SK-N-SH (cell line): ENCODE measurements at regions of chr11 and their contacts with region 1.

Region 1: DNA sequence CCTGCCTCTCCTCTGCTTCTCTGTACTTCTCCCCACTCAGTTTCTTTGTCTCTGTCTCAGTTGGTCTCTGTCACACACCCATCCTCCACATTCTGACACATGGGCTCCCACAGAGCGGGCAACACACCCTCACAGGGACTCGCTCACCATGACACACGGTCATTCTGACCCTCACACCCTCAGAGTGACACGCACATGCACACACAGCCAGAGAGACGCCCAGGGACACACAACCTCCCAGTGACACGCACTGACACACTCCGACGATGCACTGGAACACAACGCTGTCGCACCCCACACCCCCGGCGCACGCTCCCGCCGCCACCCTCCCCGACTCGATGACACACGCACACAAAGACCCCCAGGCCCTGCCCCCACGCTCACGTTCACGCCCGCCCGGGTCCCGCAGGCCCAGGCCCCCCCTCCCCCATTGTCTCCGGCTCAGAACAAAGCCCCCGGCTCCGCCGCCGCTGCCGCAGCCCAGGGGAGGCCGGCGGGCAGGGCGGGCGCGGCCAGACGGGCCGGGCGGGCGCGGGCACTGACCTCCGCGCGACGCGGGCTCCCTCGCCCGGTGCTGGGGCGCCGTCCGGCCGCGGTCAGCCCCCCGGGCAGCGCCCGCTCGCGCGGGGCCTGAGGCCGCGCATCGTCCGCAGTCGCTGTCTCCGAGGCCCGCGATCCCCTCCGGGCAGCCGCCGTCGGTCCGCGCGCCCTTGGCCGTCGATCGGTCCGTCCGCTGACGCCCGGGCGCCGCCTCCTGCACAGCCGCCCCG is 404 bp downstream of the DCHS1 start:
- DNase-seq: peak; percentile 78
- H3K4me3 ChIP-seq: peak overlapping the region; percentile 58 to 62
- H3K27ac ChIP-seq: peak overlapping the region in 1 of 2 experiments; percentile 71; a peak in 1 of 4 replicates
- H3K4me1 ChIP-seq: peaks cover 0 to 25% of the 10 kb centered on the region in 2 experiments; a peak in 1 of 4 replicates
- H3K27me3 ChIP-seq: no peaks in the 10 kb centered on the region
- CTCF ChIP-seq: no peak
- EP300 ChIP-seq: no peak
- RAD21 ChIP-seq: no peak

Region 2: GRCh38 chr11:6586434-6587359 is 68.5 kb before region 1 on chr11:
- CTCF ChIA-PET with region 1: no interaction called
- POLR2A ChIA-PET with region 1: no interaction called
- DNase-seq: peak; percentile 63
- H3K4me3 ChIP-seq: peak overlapping the region in 1 of 2 experiments; percentile 16; a peak in 1 of 4 replicates
- H3K27ac ChIP-seq: peak overlapping the region in 1 of 2 experiments; percentile 62; a peak in 2 of 4 replicates
- H3K4me1 ChIP-seq: peaks cover 8 to 11% of the 10 kb centered on the region in 2 experiments; a peak in 2 of 4 replicates
- H3K27me3 ChIP-seq: no peaks in the 10 kb centered on the region
- CTCF ChIP-seq: no peak
- EP300 ChIP-seq: no peak
- RAD21 ChIP-seq: no peak

Region 3: DNA sequence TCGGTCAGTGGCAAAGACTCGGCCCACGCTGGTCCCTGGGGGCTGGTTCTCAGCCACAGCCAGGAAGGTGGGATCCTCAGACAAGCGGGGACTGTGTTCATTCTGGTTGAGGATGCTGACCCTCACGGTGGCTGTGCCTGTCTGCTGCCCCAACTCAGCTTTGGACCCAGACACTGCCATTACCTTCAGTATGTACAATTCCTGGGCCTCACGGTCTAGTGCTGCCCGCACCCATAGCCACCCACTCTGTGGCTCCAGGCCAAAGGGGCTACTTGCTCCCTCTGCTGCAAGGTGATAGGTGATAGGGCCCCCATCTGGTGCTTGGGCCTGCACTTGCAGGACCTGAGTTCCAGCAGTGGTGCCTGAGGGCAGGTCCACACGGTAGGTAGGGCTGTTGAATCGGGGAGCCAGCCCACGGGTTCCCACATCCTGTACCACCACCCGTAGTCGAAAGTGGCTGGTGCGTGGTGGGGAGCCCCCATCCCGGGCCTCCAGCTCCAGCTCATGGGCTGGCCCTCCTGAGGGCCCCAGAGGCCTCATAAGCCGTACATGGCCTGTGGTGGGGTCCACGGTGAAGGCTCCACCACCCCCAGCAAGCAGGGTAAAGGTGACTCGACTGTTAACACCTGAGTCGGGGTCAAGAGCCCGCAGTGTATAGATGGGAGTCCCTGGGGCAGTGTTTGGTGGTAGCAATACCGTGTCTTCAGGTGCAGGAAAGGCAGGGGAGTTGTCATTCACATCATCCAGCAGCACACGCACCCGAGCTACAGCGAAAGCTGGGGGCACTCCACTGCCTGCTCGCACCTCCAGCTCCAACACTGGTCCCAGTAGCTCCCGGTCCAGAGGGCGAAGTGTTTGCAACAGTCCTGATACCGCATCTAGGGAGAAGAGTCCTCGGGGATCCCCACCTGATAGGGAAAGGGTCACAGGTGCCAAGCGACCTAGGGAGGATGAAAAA is 22.8 kb before region 1 on chr11:
- CTCF ChIA-PET with region 1: no interaction called
- POLR2A ChIA-PET with region 1: no interaction called
- DNase-seq: no peak
- H3K4me3 ChIP-seq: no peak overlapping the region
- H3K27ac ChIP-seq: no peak overlapping the region
- H3K4me1 ChIP-seq: no peaks in the 10 kb centered on the region
- H3K27me3 ChIP-seq: no peaks in the 10 kb centered on the region
- CTCF ChIP-seq: no peak
- EP300 ChIP-seq: no peak
- RAD21 ChIP-seq: no peak

Region 4: DNA sequence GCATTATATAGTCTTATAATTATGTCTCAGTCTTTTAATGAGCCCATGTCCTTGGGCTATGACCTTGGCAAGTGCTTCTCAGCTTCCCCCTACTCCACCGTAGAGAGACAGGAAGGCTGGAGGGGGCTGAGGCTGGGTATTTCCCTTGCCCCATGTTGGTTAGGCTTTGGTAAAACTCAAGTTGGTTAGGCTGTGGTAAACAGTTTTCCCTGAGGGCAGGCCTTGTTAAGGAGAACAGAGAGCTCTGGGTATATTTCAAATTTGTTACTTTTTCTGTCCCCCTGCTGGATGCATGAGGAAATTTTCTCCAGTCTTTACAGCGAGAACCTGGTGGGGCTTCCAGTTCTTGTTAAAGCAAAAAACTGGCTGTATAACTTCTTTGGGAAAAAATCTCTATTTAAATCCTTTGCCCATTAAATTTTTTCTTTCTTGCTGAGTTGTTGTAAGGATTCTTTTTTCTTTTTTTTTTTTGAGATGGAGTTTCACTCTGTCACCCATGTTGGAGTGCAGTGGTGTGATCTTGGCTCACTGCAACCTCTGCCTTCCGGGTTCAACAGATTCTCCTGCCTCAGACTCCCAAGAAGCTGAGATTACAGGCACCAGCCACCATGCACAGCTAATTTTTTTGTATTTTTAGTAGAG is 12.6 kb after region 1 on chr11:
- CTCF ChIA-PET with region 1: interaction called, 11 read pairs
- POLR2A ChIA-PET with region 1: interaction called, 4 read pairs
- DNase-seq: no peak
- H3K4me3 ChIP-seq: no peak overlapping the region
- H3K27ac ChIP-seq: no peak overlapping the region
- H3K4me1 ChIP-seq: no peaks in the 10 kb centered on the region
- H3K27me3 ChIP-seq: no peaks in the 10 kb centered on the region
- CTCF ChIP-seq: peak; percentile 57
- EP300 ChIP-seq: no peak
- RAD21 ChIP-seq: peak; percentile 18; the same call in 1 of the 2 replicates